ENCODE measurements at regions of chr1 and their contacts with region 1.

Region 1: GRCh38 chr1:209747580-209748262 is 8.1 kb upstream of the TRAF3IP3 start:
- DNase-seq: peak; percentile 83
- ATAC-seq: peak; percentile 96
- H3K4me3 Mint-ChIP-seq: peak overlapping the region; percentile 82
- H3K27ac Mint-ChIP-seq: peak overlapping the region; percentile 87
- H3K4me1 Mint-ChIP-seq: peaks cover 43% of the 10 kb centered on the region
- H3K27me3 Mint-ChIP-seq: no peaks in the 10 kb centered on the region
- CTCF ChIP-seq: peak; percentile 91

Region 2: GRCh38 chr1:209434066-209434465 is 313.7 kb before region 1 on chr1:
- CTCF ChIA-PET with region 1: no interaction called
- POLR2A ChIA-PET with region 1: no interaction called
- intact Hi-C with region 1: no loop called
- DNase-seq: no peak
- ATAC-seq: no peak
- H3K4me3 Mint-ChIP-seq: no peak overlapping the region
- H3K27ac Mint-ChIP-seq: no peak overlapping the region
- H3K4me1 Mint-ChIP-seq: no peaks in the 10 kb centered on the region
- H3K27me3 Mint-ChIP-seq: peaks cover 15% of the 10 kb centered on the region
- CTCF ChIP-seq: no peak

Region 3: DNA sequence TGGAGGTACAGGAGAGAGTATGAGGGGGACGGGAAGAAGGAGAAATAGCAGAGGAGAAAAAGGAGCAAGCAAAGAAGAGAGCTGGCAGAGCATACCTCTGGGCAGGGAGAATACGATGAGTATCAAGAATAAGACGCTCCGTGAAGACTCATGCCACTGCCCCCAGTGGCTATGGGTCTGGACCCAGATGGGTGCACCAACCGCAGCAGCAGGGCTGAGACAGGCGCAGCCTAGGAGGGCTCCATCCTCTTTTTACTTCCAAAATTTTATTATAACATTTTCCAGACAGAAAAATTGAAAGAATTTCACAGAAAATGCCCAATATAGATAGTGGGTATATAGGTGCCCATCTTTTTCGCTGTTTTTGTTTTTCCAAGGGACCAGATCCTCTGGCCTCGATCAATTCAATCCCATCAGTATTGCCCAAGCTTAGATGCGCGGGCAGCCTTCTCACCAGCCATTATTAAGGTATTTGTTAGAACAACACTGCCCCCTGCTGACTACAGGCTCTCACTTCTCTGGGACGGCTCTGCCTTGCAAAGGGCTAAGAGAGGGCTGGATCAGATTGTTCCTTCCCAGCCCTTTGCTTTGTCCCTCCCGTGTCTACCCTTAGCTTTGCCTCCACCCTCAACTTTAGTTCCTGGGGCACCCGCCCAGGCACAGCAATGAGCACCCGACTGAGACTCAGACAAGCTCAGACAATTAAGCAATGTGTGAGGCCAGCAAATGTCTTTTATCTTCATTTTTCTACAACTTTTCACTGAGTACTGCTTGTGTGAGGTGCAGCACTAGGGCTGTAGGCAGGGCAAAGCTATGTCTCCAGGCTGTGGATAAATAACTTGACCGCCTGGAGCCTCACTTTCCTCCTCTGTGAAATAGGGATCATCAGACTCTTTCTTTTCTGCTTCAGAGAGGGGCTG is 181.7 kb before region 1 on chr1:
- CTCF ChIA-PET with region 1: interaction called, 5 read pairs
- POLR2A ChIA-PET with region 1: no interaction called
- intact Hi-C with region 1: loop called (anchors 1 kb)
- DNase-seq: peak; percentile 23
- ATAC-seq: peak; percentile 77
- H3K4me3 Mint-ChIP-seq: no peak overlapping the region
- H3K27ac Mint-ChIP-seq: no peak overlapping the region
- H3K4me1 Mint-ChIP-seq: peaks cover 6% of the 10 kb centered on the region
- H3K27me3 Mint-ChIP-seq: peaks cover 52% of the 10 kb centered on the region
- CTCF ChIP-seq: no peak

Region 4: GRCh38 chr1:209601809-209602657 is 145.7 kb before region 1 on chr1:
- CTCF ChIA-PET with region 1: no interaction called
- POLR2A ChIA-PET with region 1: no interaction called
- intact Hi-C with region 1: loop called (anchors 1 kb)
- DNase-seq: no peak
- ATAC-seq: peak; percentile 69
- H3K4me3 Mint-ChIP-seq: no peak overlapping the region
- H3K27ac Mint-ChIP-seq: no peak overlapping the region
- H3K4me1 Mint-ChIP-seq: no peaks in the 10 kb centered on the region
- H3K27me3 Mint-ChIP-seq: peaks cover 16% of the 10 kb centered on the region
- CTCF ChIP-seq: no peak

Region 5: GRCh38 chr1:209692745-209693504 is 54.8 kb before region 1 on chr1:
- CTCF ChIA-PET with region 1: interaction called, 4 read pairs
- POLR2A ChIA-PET with region 1: no interaction called
- intact Hi-C with region 1: loop called (anchors 1 kb)
- DNase-seq: peak; percentile 21
- ATAC-seq: peak; percentile 54
- H3K4me3 Mint-ChIP-seq: no peak overlapping the region
- H3K27ac Mint-ChIP-seq: no peak overlapping the region
- H3K4me1 Mint-ChIP-seq: peaks cover 4% of the 10 kb centered on the region
- H3K27me3 Mint-ChIP-seq: peaks cover 3% of the 10 kb centered on the region
- CTCF ChIP-seq: no peak

Region 6: GRCh38 chr1:209710093-209710492 is 37.6 kb before region 1 on chr1:
- CTCF ChIA-PET with region 1: no interaction called
- POLR2A ChIA-PET with region 1: no interaction called
- intact Hi-C with region 1: no loop called
- DNase-seq: no peak
- ATAC-seq: no peak
- H3K4me3 Mint-ChIP-seq: no peak overlapping the region
- H3K27ac Mint-ChIP-seq: no peak overlapping the region
- H3K4me1 Mint-ChIP-seq: no peaks in the 10 kb centered on the region
- H3K27me3 Mint-ChIP-seq: peaks cover 16% of the 10 kb centered on the region
- CTCF ChIP-seq: no peak

Region 7: GRCh38 chr1:209769171-209769904 is 21.6 kb after region 1 on chr1:
- CTCF ChIA-PET with region 1: interaction called, 88 read pairs
- POLR2A ChIA-PET with region 1: interaction called, 21 read pairs
- intact Hi-C with region 1: loop called (anchors 1 kb)
- DNase-seq: no peak
- ATAC-seq: peak; percentile 43
- H3K4me3 Mint-ChIP-seq: no peak overlapping the region
- H3K27ac Mint-ChIP-seq: no peak overlapping the region
- H3K4me1 Mint-ChIP-seq: peaks cover 16% of the 10 kb centered on the region
- H3K27me3 Mint-ChIP-seq: no peaks in the 10 kb centered on the region
- CTCF ChIP-seq: no peak

Region 8: DNA sequence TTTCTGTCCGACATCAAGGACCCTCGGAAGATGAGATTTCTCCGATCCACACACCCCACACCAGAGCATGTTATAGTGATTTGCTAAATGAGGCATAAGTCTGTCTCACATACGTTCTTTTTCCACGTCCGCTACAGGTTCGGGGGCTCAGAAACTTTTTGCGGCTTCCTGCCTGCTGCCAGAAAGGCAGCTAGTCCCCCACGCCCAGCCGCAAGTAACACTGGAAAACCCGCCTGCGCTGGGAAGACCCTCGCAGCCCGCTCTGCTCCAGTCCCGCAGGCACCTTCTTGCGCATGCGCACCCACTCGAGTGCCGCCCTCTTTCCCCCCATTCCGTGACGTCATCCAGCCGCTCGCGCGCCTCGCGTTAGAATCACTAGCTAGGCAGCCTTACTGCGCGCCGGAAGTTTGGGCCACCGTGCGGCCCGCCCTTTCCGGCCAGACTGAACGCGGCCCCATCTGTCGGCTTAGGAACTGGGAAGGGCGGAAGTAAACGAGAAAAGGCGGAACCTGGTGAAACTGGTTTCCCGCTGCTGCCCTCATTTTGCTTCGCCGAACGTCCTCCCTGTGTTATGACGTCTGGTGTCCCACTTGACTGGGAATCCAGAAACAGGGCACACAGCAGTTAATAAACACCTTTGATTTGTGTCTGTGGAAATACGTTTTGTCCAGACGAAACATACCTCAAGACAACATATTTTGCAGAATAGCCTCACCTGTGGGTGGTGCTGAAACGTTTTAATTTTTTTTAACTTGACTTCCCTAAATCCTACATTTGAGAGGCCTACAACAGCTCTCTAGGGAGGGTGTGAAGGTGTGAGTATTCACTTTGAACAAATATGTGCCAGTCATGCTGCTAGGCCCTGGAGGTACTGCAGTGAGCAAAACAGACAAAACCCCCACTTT is 36.8 kb after region 1 on chr1 and contains the start of gene C1orf74:
- CTCF ChIA-PET with region 1: interaction called, 4 read pairs
- POLR2A ChIA-PET with region 1: interaction called, 9 read pairs
- intact Hi-C with region 1: loop called (anchors 5 kb)
- DNase-seq: peak; percentile 99
- ATAC-seq: peak; percentile 98
- H3K4me3 Mint-ChIP-seq: peak within 1 kb of the TSS; percentile 99
- H3K27ac Mint-ChIP-seq: peak within 1 kb of the TSS; percentile 98
- H3K4me1 Mint-ChIP-seq: peaks cover 20% of the 10 kb centered on the region
- H3K27me3 Mint-ChIP-seq: peaks cover 10% of the 10 kb centered on the region
- CTCF ChIP-seq: no peak
- total RNA-seq, gene C1orf74: 3.7 TPM in 2 replicates

Region 9: DNA sequence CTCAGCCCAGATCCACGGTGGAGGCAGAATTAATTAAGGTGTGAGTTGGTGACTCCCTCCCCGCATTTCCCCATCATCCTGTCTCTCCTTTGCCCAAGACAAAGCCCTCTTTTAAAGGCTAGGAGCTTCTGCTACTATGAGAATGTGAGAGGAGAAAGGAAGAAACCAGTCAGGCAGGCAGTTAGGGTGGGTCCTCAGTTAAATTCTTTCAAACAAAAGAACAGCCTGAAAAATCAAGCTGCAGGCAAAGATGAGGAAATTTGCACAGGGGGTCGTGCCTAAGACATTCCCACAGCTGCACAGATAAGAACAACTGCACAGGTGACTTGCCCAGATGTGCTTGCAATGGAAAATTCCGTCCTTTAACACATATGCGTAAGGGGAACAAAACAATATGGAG is 532.5 kb after region 1 on chr1:
- CTCF ChIA-PET with region 1: no interaction called
- POLR2A ChIA-PET with region 1: no interaction called
- intact Hi-C with region 1: no loop called
- DNase-seq: no peak
- ATAC-seq: no peak
- H3K4me3 Mint-ChIP-seq: no peak overlapping the region
- H3K27ac Mint-ChIP-seq: no peak overlapping the region
- H3K4me1 Mint-ChIP-seq: no peaks in the 10 kb centered on the region
- H3K27me3 Mint-ChIP-seq: peaks cover 24% of the 10 kb centered on the region
- CTCF ChIP-seq: no peak